ENCODE measurements at regions of chr11 and their contacts with region 1.

Region 1: GRCh38 chr11:6443269-6444003 is 2.6 kb upstream of the HPX start:
- DNase-seq: peak; percentile 61
- H3K4me3 Mint-ChIP-seq: no peak overlapping the region
- H3K27ac Mint-ChIP-seq: no peak overlapping the region
- H3K4me1 Mint-ChIP-seq: no peaks in the 10 kb centered on the region
- H3K27me3 Mint-ChIP-seq: no peaks in the 10 kb centered on the region
- CTCF ChIP-seq: peak; percentile 65

Region 2: DNA sequence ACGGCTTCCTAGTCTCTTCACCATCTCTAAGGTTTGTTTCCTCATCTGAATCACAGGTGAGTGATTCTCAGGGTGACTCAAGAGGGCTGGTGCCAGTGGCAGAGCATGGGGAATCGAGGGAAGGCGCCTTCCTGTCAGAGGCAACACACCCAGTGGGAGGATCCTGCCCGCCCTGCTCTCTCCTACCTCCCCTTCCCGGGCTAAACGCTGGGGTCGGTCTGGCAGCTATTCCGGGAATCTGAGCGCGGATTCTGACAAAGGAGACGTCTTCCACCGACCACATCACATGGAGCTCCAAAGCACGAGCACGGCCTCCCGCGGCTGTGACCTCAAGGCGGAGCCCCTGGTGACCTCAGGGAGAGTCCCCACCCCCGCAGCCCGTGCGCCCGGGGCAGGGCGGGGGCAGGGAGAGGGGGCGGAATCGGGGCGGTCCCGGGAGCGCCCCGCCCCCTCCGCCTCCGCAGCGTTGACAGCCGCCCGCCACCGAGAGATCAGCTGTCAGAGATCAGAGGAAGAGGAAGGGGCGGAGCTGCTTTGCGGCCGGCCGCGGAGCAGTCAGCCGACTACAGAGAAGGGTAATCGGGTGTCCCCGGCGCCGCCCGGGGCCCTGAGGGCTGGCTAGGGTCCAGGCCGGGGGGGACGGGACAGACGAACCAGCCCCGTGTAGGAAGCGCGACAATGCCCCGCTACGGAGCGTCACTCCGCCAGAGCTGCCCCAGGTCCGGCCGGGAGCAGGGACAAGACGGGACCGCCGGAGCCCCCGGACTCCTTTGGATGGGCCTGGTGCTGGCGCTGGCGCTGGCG is 53.3 kb before region 1 on chr11 and contains the start of gene SMPD1:
- CTCF ChIA-PET with region 1: interaction called, 11 read pairs
- intact Hi-C with region 1: no loop called
- DNase-seq: peak; percentile 89
- H3K4me3 Mint-ChIP-seq: peak within 1 kb of the TSS; percentile 89
- H3K27ac Mint-ChIP-seq: peak within 1 kb of the TSS; percentile 84
- H3K4me1 Mint-ChIP-seq: peaks cover 27% of the 10 kb centered on the region
- H3K27me3 Mint-ChIP-seq: no peaks in the 10 kb centered on the region
- CTCF ChIP-seq: no peak
- total RNA-seq, gene SMPD1: 21.2 and 25.6 TPM in 2 replicates

Region 3: GRCh38 chr11:6505577-6506240 is 62.3 kb after region 1 on chr11:
- CTCF ChIA-PET with region 1: interaction called, 6 read pairs
- intact Hi-C with region 1: loop called (anchors 2 kb)
- DNase-seq: peak; percentile 24
- H3K4me3 Mint-ChIP-seq: no peak overlapping the region
- H3K27ac Mint-ChIP-seq: no peak overlapping the region
- H3K4me1 Mint-ChIP-seq: no peaks in the 10 kb centered on the region
- H3K27me3 Mint-ChIP-seq: no peaks in the 10 kb centered on the region
- CTCF ChIP-seq: peak; percentile 47

Measured in Calu3 (cell line).